ENCODE measurements at regions of chr7 and their contacts with region 1.

Region 1: DNA sequence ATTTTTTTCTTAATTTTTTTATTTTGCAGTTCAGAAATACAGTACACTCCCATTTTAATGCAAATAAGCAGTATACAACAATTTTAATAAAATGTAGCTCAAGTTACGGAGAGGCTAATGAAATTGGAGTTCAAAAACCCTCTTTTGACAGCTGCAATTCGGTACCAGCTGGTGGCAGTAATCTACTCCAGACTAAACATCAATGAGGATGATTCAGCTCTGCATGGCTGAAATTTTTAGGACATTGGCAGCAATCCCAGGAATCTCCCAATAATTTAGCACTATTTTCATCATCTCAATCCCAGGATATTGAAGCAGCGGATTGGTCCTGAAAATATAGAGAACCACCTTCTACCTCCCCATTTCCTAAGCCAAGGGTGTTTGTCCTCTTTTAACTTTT is 278.8 kb downstream of the CACNA2D1 start:
- DNase-seq: no peak
- H3K4me3 Mint-ChIP-seq: no peak overlapping the region
- H3K27ac Mint-ChIP-seq: no peak overlapping the region
- H3K4me1 Mint-ChIP-seq: no peaks in the 10 kb centered on the region
- H3K27me3 Mint-ChIP-seq: no peaks in the 10 kb centered on the region
- CTCF ChIP-seq: no peak

Region 2: GRCh38 chr7:82221152-82221674 is 56.4 kb after region 1 on chr7:
- CTCF ChIA-PET with region 1: no interaction called
- intact Hi-C with region 1: no loop called
- DNase-seq: no peak
- H3K4me3 Mint-ChIP-seq: no peak overlapping the region
- H3K27ac Mint-ChIP-seq: no peak overlapping the region
- H3K4me1 Mint-ChIP-seq: no peaks in the 10 kb centered on the region
- H3K27me3 Mint-ChIP-seq: no peaks in the 10 kb centered on the region
- CTCF ChIP-seq: no peak

Region 3: DNA sequence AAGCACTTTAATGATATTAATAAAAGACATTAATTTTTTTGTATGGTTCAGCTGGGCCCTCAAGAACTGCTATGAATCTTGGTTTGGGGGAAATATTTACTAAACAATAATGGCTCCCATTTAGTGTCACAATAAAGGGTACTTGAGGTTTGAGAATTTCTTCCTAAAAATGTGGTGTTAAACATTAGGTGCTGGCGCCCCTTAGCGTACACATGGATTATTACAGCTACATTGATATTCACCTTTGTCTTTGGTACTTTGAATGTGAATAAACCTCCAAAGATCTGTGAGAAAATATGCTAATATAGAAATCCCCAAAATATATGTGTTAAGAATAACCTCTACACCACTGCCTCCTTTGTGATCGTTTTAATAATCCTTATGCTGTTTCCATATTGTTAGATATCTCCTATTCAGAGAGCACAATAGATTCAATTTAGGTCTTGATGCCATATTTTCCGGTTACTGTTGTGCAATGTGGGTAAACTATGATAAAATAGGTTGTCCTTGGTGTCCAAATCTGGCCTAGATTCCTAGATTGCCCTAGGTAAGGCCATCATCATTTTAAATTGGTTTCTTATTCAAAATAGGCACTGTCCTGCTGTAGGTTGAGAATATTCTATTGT is 440.5 kb after region 1 on chr7:
- CTCF ChIA-PET with region 1: no interaction called
- intact Hi-C with region 1: loop called (anchors 5 kb)
- DNase-seq: peak; percentile 29
- H3K4me3 Mint-ChIP-seq: no peak overlapping the region
- H3K27ac Mint-ChIP-seq: no peak overlapping the region
- H3K4me1 Mint-ChIP-seq: no peaks in the 10 kb centered on the region
- H3K27me3 Mint-ChIP-seq: no peaks in the 10 kb centered on the region
- CTCF ChIP-seq: no peak

Measured in Calu3 (cell line).